Activated T-helper 1 cell treated with anti-CD3 and anti-CD28 coated beads, Interleukin-12 subunit alpha, Interleukin-12 subunit beta, Interleukin-2, Interleukin-4 antibody, amounts not matched to agents 30 ng/mL and 10 ng/mL and 1 ng/mL, durations not matched to agents 14 hours and 24 hours and 36 hours (primary cell): ENCODE measurements at regions of chr6 and their contacts with region 1.

Region 1: DNA sequence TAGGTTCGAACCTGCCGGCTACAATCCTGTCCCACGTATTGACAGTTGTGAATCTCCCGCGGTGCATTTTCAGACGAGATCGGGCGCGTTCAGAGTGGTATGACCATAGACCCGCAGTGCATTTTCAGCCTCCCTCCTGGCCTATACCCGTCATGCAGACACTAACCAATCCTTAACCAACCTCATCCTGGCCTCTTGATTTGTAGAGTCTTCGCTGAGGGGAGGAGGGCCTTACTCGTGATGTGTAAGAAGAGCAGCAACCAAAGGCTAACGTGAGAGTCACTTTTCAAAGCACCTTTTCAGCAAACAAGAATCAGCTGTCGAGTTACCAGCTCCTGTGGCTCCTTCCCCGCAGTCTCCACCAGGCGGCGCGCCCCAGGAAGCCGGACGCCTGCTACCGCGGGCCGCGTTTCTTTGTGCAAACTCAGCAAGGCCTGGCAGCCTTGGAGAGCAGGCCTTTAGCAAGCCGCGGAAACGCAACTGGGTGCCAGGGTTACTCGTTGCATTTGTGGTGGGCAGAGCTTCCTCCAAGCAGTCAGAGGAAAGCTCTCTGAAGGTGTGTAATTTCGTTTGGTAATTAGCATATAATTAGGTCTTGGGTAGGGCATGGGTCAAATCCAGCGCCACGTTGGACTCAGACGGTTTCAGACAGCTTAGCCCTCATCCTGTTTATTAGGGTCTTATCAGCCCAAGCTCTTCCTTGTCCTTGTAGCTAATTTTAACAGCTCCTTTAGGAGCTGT is 139.8 kb downstream of the OR2B2 start:
- DNase-seq: peak; percentile 82
- H3K4me3 Mint-ChIP-seq: no peak overlapping the region
- H3K27ac Mint-ChIP-seq: peak overlapping the region; percentile 56
- H3K4me1 Mint-ChIP-seq: peaks cover 19% of the 10 kb centered on the region
- H3K27me3 Mint-ChIP-seq: peaks cover 22% of the 10 kb centered on the region

Region 2: DNA sequence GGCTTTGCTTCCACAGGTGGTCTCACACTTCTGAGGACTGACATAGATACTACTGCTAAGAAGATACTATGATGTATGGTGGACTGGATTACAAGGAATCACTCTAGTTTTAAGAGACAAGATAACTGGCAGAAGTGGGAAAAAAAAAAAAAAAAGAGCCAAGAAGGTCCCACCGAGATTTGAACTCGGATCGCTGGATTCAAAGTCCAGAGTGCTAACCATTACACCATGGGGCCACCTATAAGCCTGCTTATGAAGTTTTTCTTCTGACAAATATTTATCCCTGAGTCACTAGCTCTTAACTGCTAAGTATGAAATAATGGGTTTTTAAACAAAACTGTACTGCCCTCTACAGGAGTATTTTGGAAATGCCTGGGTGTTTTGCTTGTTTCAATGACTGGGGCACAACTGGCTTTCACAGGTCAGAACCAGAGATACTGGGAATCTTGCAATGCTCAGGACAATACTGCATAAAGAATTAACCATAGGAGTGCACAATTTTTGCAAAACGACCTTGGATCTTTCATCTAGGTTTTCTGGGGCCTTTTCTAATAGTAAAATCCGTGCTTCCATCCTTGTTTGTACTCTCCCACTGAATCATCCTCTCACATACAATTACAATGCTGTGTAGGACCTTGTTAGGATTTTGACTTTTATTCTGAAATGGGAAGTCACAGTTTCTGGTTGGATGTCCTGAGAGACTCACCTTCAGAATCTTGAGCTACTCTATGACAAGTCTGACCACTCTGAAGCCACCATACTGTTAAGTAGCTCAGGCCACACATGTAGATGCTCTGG is 23.5 kb after region 1 on chr6:
- intact Hi-C with region 1: loop called (anchors 1 kb)
- DNase-seq: peak; percentile 58
- H3K4me3 Mint-ChIP-seq: no peak overlapping the region
- H3K27ac Mint-ChIP-seq: peak overlapping the region; percentile 65
- H3K4me1 Mint-ChIP-seq: peaks cover 42% of the 10 kb centered on the region
- H3K27me3 Mint-ChIP-seq: peaks cover 12% of the 10 kb centered on the region